ENCODE measurements at regions of chr1 and their contacts with region 1.

Region 1: GRCh38 chr1:153670859-153671627 is at the start of gene ILF2:
- DNase-seq: peak; percentile 99
- H3K4me3 Mint-ChIP-seq: no peak within 1 kb of the TSS
- H3K27ac Mint-ChIP-seq: no peak within 1 kb of the TSS
- H3K4me1 Mint-ChIP-seq: peaks cover 31% of the 10 kb centered on the region
- H3K27me3 Mint-ChIP-seq: no peaks in the 10 kb centered on the region
- total RNA-seq, gene ILF2: 315 to 323 TPM

Region 2: DNA sequence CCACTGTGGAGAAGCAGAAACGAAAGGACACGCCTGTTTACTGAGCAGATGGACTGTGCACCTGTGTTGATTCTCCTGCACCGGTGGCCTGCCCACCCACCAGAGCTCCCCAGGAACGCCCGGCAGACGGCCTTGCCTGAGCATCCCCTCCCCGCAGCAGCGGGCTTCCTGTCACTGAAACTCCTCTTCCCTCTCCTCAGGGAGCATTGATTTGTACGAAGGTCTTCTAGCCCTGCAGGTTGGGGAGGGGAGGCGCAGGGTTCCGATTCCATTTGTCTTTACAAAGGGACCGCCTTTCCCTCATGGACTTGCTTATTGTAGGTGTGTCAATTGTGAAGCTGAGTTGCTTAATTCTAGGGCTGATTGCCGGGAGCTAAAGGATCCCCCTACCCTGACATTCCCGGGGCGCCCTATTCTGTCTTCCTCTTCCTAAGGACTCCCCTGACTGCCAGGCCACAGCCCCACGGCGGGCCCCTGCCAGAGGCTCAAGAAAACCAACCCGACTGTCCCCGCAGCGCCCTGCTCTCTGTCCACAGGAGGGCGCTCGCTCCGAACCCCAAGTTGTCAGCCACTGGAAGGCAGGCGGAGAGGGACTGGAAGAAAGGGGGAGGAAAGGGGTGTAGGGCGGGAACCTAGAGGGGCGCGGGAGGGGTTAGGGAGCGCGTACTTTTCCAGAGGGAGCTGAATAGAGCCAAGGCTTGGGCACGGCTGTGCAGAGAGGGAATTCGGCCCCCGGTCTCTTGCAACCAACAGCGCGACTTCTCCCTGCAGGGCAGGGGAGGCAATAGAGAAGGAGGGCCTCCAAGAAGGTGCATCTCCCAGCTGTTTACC is 138.1 kb before region 1 on chr1:
- CTCF ChIA-PET with region 1: interaction called, 14 read pairs
- POLR2A ChIA-PET with region 1: interaction called, 3 read pairs
- intact Hi-C with region 1: loop called (anchors 1 kb)
- DNase-seq: peak; percentile 90
- H3K4me3 Mint-ChIP-seq: peak overlapping the region; percentile 91
- H3K27ac Mint-ChIP-seq: peak overlapping the region; percentile 96
- H3K4me1 Mint-ChIP-seq: peaks cover 58% of the 10 kb centered on the region
- H3K27me3 Mint-ChIP-seq: no peaks in the 10 kb centered on the region

Region 3: DNA sequence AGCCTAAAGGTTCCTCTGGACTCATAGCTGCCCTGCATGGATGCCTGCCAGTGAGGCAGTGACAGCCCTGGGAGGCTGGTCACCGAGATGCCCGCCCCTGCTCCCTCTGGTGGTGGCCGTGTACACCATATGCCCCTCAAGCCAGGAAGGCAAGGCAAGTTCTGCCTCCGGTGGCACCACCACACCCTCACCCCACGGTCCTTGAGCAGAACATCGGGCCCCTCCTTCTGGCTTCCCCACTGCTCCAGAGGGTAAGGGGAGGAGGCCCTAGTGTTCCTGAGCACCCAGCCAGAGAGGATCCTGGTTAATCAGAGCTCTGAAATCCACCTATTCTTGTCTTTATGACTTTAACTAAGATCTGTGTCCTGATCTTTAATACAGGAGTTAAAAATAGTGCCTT is 53.4 kb before region 1 on chr1:
- CTCF ChIA-PET with region 1: no interaction called
- POLR2A ChIA-PET with region 1: no interaction called
- intact Hi-C with region 1: no loop called
- DNase-seq: peak; percentile 80
- H3K4me3 Mint-ChIP-seq: no peak overlapping the region
- H3K27ac Mint-ChIP-seq: no peak overlapping the region
- H3K4me1 Mint-ChIP-seq: no peaks in the 10 kb centered on the region
- H3K27me3 Mint-ChIP-seq: no peaks in the 10 kb centered on the region

Region 4: DNA sequence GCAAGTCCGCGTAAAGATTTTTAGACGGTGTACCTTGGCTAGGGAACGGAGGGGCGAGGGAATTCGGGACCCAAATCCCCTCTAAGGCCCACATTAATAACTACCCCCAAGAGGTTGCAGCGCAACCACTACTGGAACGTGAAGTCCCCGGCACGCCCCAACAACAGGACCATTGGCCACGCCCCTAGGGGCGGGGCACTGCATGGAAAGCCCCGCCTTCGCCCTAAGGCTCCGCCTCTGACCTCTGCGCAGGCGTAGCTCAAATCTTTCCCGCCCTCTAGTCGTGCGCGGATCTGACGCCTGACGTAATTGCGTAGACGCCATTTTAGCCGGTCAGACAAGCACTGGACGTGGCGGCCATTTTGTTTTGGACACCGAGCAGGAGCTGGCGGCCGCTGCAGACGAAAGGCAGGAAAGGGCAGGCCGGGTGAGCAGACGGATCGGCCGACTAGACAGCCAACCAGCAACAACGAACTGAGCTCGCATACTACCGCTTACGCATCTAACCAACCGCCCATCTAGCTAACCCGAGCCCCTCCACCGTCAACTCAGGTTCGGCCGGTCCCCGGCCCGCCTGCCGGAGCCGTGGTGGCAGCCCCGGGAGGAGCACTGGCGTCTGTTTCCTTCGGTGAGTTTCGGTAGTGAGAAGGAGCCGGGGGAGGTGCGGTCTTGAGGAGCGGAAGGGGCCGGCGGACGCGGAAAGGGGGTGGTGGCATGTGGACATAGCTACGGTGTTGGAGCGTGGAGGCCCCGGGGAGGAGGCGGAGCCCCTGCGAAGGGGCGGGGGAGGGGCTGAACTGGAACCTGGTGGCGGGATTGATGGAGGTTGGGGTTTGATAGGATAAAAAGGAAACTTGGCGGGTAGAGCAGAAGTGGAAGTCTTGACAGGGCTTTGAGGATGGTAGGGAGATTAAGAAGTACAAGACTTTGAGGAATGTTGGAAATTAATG is 37.1 kb before region 1 on chr1 and contains the start of gene CHTOP:
- CTCF ChIA-PET with region 1: interaction called, 11 read pairs
- POLR2A ChIA-PET with region 1: interaction called, 19 read pairs
- intact Hi-C with region 1: loop called (anchors 1 kb)
- DNase-seq: peak; percentile 98
- H3K4me3 Mint-ChIP-seq: peak within 1 kb of the TSS; percentile 92
- H3K27ac Mint-ChIP-seq: peak within 1 kb of the TSS; percentile 100
- H3K4me1 Mint-ChIP-seq: peaks cover 45% of the 10 kb centered on the region
- H3K27me3 Mint-ChIP-seq: no peaks in the 10 kb centered on the region
- total RNA-seq, gene CHTOP: 92.5 to 94.7 TPM

Region 5: GRCh38 chr1:153727463-153728304 is 56.6 kb after region 1 on chr1 and contains the start of gene INTS3:
- CTCF ChIA-PET with region 1: interaction called, 3 read pairs
- POLR2A ChIA-PET with region 1: no interaction called
- intact Hi-C with region 1: loop called (anchors 2 kb)
- DNase-seq: peak; percentile 100
- H3K4me3 Mint-ChIP-seq: peak within 1 kb of the TSS; percentile 95
- H3K27ac Mint-ChIP-seq: peak within 1 kb of the TSS; percentile 97
- H3K4me1 Mint-ChIP-seq: peaks cover 39% of the 10 kb centered on the region
- H3K27me3 Mint-ChIP-seq: no peaks in the 10 kb centered on the region
- total RNA-seq, gene INTS3: 45.5 to 47.7 TPM

Region 6: GRCh38 chr1:153958111-153958960 is 287.3 kb after region 1 on chr1 and contains the start of gene CRTC2:
- CTCF ChIA-PET with region 1: no interaction called
- POLR2A ChIA-PET with region 1: no interaction called
- intact Hi-C with region 1: loop called (anchors 1 kb)
- DNase-seq: peak; percentile 99
- H3K4me3 Mint-ChIP-seq: peak within 1 kb of the TSS; percentile 97
- H3K27ac Mint-ChIP-seq: peak within 1 kb of the TSS; percentile 96
- H3K4me1 Mint-ChIP-seq: peaks cover 51% of the 10 kb centered on the region
- H3K27me3 Mint-ChIP-seq: no peaks in the 10 kb centered on the region
- total RNA-seq, gene CRTC2: 60.8 to 78.0 TPM